H1 (cell line): ENCODE measurements at regions of chr6 and their contacts with region 1.

Region 1: GRCh38 chr6:125314019-125314581 is 12.3 kb upstream of the HDDC2 start:
- DNase-seq: peak in 1 of 2 experiments; percentile 59
- H3K4me3 ChIP-seq: no peak overlapping the region
- H3K27ac ChIP-seq: no peak overlapping the region
- H3K4me1 ChIP-seq: peaks cover 0 to 2% (median 0%) of the 10 kb centered on the region in 4 experiments; a peak in 1 of 7 replicates
- H3K27me3 ChIP-seq: no peaks in the 10 kb centered on the region
- CTCF ChIP-seq: peak; percentile 72 to 92 (median 81)
- EP300 ChIP-seq: no peak
- POLR2A ChIP-seq: no peak
- RAD21 ChIP-seq: peak; percentile 97 to 98

Region 2: DNA sequence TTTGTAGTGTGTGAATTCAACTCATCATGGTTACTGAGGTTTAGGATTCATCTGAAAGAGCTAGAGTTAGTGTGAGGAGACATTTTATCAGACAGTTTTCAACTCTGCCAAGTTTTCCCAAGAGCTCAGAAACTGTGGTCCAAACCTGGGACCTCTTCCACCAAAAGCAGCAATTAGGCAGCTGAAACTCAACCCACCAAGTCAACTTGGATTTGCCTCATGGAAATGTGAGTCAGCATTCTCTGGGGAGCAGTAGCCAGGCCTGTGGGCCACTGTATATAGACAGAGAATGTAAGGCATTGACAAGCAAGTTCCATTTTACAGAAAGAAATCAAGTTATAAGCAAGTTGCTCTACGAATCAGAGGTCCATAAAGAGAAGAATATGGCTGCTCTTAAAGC is 166.5 kb after region 1 on chr6:
- CTCF ChIA-PET with region 1: interaction called, 10 read pairs
- POLR2A ChIA-PET with region 1: no interaction called
- DNase-seq: no peak
- H3K4me3 ChIP-seq: no peak overlapping the region
- H3K27ac ChIP-seq: no peak overlapping the region
- H3K4me1 ChIP-seq: peaks cover 0 to 2% (median 0%) of the 10 kb centered on the region in 4 experiments; a peak in 2 of 7 replicates
- H3K27me3 ChIP-seq: no peaks in the 10 kb centered on the region
- CTCF ChIP-seq: no peak
- EP300 ChIP-seq: no peak
- POLR2A ChIP-seq: no peak
- RAD21 ChIP-seq: no peak

Region 3: GRCh38 chr6:125753218-125753936 is 439.3 kb after region 1 on chr6:
- CTCF ChIA-PET with region 1: interaction called, 158 read pairs
- POLR2A ChIA-PET with region 1: interaction called, 3 read pairs
- DNase-seq: no peak
- H3K4me3 ChIP-seq: peak overlapping the region in 1 of 4 experiments; percentile 30; a peak in 1 of 8 replicates
- H3K27ac ChIP-seq: no peak overlapping the region
- H3K4me1 ChIP-seq: peaks cover 0 to 14% (median 2%) of the 10 kb centered on the region in 4 experiments; a peak in 4 of 7 replicates
- H3K27me3 ChIP-seq: peaks cover 0 to 10% (median 8%) of the 10 kb centered on the region in 4 experiments; a peak in 6 of 7 replicates
- CTCF ChIP-seq: peak in 1 of 3 experiments; percentile 34; a peak in 1 of 4 replicates
- EP300 ChIP-seq: no peak
- POLR2A ChIP-seq: no peak
- RAD21 ChIP-seq: peak in 1 of 2 experiments; percentile 15; a peak in 2 of 4 replicates

Region 4: GRCh38 chr6:125769147-125769783 is 455.2 kb after region 1 on chr6:
- CTCF ChIA-PET with region 1: interaction called, 120 read pairs
- POLR2A ChIA-PET with region 1: interaction called, 5 read pairs
- DNase-seq: no peak
- H3K4me3 ChIP-seq: no peak overlapping the region
- H3K27ac ChIP-seq: no peak overlapping the region
- H3K4me1 ChIP-seq: no peaks in the 10 kb centered on the region
- H3K27me3 ChIP-seq: no peaks in the 10 kb centered on the region
- CTCF ChIP-seq: no peak
- EP300 ChIP-seq: no peak
- POLR2A ChIP-seq: no peak
- RAD21 ChIP-seq: no peak

Region 5: GRCh38 chr6:125790358-125791150 is 476.5 kb after region 1 on chr6 and contains the start of gene NCOA7:
- CTCF ChIA-PET with region 1: interaction called, 23 read pairs
- POLR2A ChIA-PET with region 1: interaction called, 3 read pairs
- DNase-seq: peak in 1 of 2 experiments; percentile 84
- H3K4me3 ChIP-seq: peak within 1 kb of the TSS; percentile 66 to 84 (median 74)
- H3K27ac ChIP-seq: peak within 1 kb of the TSS; percentile 49; the same call in 1 of the 2 replicates
- H3K4me1 ChIP-seq: peaks cover 2 to 10% (median 4%) of the 10 kb centered on the region in 4 experiments; a peak in 4 of 7 replicates
- H3K27me3 ChIP-seq: no peaks in the 10 kb centered on the region; a peak in 1 of 7 replicates
- CTCF ChIP-seq: no peak
- EP300 ChIP-seq: 0 out of 3 replicates have a peak, but pooled peaks of 1 of the 2 experiments have one; percentile 11
- POLR2A ChIP-seq: peak; percentile 53 to 77
- RAD21 ChIP-seq: no peak
- total RNA-seq, gene NCOA7: 10.3 and 10.7 TPM in 2 replicates